Activated CD4-positive, alpha-beta T cell treated with anti-CD3 and anti-CD28 coated beads for 36 hours (primary cell): ENCODE measurements at regions of chr5 and their contacts with region 1.

Region 1: DNA sequence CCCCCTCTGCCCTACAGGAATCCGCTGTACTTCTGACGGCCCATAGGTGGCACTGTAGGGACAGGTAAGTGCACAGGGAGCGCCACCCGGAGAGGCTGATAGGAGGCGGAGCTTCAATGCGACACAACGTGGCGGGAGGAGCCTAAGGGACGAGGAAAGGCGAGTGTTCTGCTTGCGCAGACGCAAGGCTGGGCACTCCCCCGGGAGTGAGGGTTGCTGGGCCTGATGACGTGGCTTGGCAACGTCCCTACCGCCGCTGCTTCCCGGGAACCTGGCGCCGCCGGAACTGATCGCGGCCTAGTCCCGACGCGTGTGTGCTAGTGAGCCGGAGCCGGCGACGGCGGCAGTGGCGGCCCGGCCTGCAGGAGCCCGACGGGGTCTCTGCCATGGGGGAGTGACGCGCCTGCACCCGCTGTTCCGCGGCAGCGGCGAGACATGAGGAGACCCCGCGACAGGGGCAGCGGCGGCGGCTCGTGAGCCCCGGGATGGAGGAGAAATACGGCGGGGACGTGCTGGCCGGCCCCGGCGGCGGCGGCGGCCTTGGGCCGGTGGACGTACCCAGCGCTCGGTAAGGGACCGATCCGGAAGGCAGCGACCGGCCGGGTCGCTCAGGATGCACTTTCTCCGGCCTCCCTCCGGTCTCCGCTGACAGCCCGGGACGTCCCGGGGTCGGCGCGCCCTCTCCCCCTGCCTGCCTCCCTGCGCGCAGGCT is at the start of gene SLC30A5:
- DNase-seq: peak; percentile 99
- ATAC-seq: peak; percentile 100
- H3K4me3 Mint-ChIP-seq: peak within 1 kb of the TSS; percentile 90
- H3K27ac Mint-ChIP-seq: peak within 1 kb of the TSS; percentile 93
- H3K4me1 Mint-ChIP-seq: peaks cover 27% of the 10 kb centered on the region
- H3K27me3 Mint-ChIP-seq: no peaks in the 10 kb centered on the region
- total RNA-seq, gene SLC30A5: 44.1 to 45.1 TPM

Region 2: GRCh38 chr5:68505917-68506860 is 587.7 kb before region 1 on chr5:
- CTCF ChIA-PET with region 1: no interaction called
- POLR2A ChIA-PET with region 1: no interaction called
- intact Hi-C with region 1: no loop called
- DNase-seq: no peak
- ATAC-seq: no peak
- H3K4me3 Mint-ChIP-seq: no peak overlapping the region
- H3K27ac Mint-ChIP-seq: no peak overlapping the region
- H3K4me1 Mint-ChIP-seq: no peaks in the 10 kb centered on the region
- H3K27me3 Mint-ChIP-seq: no peaks in the 10 kb centered on the region

Region 3: DNA sequence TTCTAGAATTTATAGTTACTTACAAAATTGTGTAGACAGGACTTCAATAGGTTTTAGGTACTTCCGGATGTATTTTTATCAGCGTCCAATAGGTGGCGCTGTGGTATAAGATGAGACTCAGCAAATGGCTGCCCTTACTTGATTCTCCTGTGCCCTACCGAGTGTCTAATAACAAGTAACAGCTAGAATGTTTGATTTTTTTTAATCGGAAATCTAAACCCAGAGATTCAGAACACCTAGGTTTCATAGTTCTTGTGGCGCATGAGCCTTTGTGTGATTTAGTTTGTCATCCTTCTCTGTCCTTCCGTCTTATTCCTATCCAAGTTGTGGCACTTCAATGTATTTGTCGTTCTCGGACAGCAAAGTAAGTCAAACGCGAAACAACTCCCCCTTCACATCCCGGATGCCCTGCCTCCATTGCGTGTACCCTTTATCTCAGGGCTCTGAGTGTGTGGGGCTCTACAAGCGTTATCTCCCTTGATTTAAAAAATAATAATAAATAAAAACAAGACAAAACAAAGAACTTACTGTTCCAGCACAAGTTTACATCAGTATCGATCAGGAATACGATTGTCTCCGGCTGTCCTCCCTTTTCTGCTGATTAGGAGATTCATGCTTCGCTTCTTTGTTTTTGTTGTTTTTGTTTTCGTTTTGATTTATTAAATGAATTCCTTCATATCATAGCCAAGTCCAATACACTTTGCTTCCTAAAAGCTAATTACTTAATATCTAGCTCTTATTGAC is 50.8 kb before region 1 on chr5:
- CTCF ChIA-PET with region 1: interaction called, 8 read pairs
- POLR2A ChIA-PET with region 1: no interaction called
- intact Hi-C with region 1: loop called (anchors 1 to 2 kb)
- DNase-seq: peak; percentile 86
- ATAC-seq: peak; percentile 97
- H3K4me3 Mint-ChIP-seq: peak overlapping the region; percentile 70
- H3K27ac Mint-ChIP-seq: peak overlapping the region; percentile 78
- H3K4me1 Mint-ChIP-seq: peaks cover 15% of the 10 kb centered on the region
- H3K27me3 Mint-ChIP-seq: no peaks in the 10 kb centered on the region

Region 4: DNA sequence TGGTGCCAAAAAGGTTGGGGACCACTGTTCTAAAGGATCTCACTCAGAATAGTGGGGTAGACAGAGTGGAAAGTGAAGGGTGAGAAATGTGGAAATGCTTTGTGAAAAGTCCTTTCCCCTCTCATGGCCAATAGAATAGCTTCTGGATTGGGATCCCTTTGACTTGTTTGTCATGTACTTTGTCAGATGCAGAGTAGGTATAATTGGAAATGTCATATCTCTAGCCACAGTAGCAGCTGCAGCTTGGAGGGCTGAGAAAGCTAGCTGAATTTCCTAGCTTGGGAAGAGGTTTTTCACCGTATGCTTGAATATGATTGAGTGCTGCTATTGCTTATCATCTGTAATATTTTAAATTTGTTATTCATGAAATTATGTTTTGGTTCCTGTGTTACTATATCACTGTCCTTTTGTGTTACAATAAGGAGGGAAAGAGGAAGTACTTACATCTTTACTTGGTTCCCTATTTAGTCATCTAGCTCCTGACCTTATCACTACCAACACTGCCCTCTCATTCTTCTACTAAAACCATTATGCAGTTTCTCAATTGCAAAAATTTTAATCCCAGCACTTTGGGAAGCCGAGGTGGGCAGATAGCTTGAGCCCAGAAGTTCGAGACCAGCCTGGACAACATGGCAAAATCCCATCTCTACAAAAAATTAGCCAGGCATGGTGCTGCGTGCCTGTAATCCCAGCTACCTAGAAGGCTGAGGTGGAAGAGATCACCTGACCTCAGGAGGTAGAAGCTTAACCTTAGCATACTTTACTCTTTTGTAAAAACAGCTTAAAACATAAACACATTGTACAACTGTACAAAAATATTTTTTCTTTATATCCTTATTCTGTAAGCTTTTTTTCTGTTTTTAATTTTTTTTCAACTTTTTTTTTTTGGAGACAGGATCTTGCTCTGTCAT is 12.3 kb after region 1 on chr5:
- CTCF ChIA-PET with region 1: interaction called, 8 read pairs
- POLR2A ChIA-PET with region 1: no interaction called
- intact Hi-C with region 1: loop called in 1 of 2 experiments (anchors 1 kb)
- DNase-seq: no peak
- ATAC-seq: no peak
- H3K4me3 Mint-ChIP-seq: no peak overlapping the region
- H3K27ac Mint-ChIP-seq: peak overlapping the region; percentile 14
- H3K4me1 Mint-ChIP-seq: no peaks in the 10 kb centered on the region
- H3K27me3 Mint-ChIP-seq: no peaks in the 10 kb centered on the region

Region 5: DNA sequence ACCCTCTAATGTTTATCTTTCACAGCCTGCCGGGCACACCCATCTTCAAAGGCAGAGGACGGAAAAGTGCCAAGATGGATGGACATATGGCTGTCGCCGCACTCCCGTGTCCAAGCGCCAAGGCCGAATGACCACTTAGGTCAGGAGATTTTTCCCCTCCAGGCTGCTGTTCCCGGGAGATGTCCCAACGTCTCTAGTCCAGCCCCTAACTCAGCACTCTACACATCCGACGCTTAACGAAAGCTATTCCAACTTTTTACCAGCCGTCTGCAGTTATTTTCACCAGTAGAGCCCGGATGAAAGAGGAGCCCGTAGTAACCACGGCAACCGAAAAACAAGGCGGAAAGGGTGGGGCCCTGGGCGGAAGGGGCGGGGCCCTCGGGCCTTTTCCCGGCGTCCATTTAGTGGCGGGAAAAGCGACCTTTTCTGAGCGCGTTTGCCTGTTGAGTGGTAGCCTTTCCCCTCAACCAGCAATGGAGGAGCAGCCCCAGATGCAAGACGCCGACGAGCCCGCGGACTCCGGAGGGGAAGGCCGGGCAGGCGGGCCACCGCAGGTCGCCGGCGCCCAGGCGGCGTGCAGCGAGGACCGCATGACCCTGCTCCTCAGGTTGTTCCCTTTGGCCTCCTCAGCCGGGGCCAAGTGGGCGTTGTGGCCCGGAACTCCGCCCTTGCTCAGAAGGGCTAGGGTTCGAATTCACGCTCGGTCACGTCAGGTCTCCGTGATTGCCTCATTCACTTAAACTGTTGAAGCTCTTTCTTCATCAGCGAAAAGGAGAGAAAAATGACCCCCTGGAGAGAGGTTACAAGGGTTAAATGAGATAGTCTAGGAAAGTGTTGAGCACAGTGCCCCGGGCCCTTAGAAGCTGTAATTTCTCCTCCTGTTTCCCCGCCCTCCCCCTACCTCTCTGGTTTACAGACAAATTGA is 95.5 kb after region 1 on chr5 and contains the start of gene CENPH:
- CTCF ChIA-PET with region 1: interaction called, 5 read pairs
- POLR2A ChIA-PET with region 1: interaction called, 11 read pairs
- intact Hi-C with region 1: loop called (anchors 1 kb)
- DNase-seq: peak; percentile 95
- ATAC-seq: peak; percentile 90
- H3K4me3 Mint-ChIP-seq: peak within 1 kb of the TSS; percentile 96
- H3K27ac Mint-ChIP-seq: peak within 1 kb of the TSS; percentile 99
- H3K4me1 Mint-ChIP-seq: peaks cover 8% of the 10 kb centered on the region
- H3K27me3 Mint-ChIP-seq: no peaks in the 10 kb centered on the region
- total RNA-seq, gene CENPH: 96.0 to 98.3 TPM

Region 6: DNA sequence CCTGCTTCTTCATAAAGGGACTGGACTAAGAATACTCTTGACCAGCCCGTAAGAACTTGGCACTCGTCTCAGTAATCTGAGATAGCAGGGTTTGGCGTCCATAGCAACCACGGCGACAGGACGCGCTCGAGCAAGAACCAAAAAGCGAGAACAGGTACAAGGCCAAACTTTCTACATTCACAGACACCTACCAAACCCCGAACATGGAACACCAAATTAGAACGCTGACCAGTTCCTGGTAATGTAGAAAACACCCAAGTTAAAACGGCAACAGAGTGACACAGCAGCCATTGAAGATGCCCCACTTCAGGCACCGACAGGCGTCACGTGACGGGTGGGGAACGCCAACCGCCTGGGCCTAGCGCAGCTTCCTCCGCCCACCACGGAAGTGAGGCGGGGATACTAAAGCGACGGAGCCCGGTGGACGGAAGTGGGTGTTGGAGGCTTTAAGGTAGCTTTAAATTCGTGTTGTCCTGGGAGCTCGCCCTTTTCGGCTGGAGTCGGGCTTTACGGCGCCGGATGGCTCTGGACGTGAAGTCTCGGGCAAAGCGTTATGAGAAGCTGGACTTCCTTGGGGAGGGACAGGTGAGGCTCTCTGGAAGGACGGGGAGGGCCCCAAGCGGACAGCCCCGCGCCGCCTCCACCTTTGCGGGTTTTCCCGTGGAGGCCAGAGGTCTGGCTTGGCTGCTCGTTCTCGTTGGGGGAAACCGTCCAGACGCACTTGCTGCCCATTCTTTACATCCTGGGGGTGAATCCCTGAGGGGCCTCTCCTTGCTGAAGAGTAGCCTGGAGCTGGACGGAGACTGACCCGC is 140.7 kb after region 1 on chr5 and contains the start of gene CDK7:
- CTCF ChIA-PET with region 1: interaction called, 9 read pairs
- POLR2A ChIA-PET with region 1: no interaction called
- intact Hi-C with region 1: loop called (anchors 1 kb)
- DNase-seq: peak; percentile 96
- ATAC-seq: peak; percentile 100
- H3K4me3 Mint-ChIP-seq: peak within 1 kb of the TSS; percentile 80
- H3K27ac Mint-ChIP-seq: peak within 1 kb of the TSS; percentile 88
- H3K4me1 Mint-ChIP-seq: peaks cover 35% of the 10 kb centered on the region
- H3K27me3 Mint-ChIP-seq: no peaks in the 10 kb centered on the region
- total RNA-seq, gene CDK7: 47.0 to 47.8 TPM

Region 7: DNA sequence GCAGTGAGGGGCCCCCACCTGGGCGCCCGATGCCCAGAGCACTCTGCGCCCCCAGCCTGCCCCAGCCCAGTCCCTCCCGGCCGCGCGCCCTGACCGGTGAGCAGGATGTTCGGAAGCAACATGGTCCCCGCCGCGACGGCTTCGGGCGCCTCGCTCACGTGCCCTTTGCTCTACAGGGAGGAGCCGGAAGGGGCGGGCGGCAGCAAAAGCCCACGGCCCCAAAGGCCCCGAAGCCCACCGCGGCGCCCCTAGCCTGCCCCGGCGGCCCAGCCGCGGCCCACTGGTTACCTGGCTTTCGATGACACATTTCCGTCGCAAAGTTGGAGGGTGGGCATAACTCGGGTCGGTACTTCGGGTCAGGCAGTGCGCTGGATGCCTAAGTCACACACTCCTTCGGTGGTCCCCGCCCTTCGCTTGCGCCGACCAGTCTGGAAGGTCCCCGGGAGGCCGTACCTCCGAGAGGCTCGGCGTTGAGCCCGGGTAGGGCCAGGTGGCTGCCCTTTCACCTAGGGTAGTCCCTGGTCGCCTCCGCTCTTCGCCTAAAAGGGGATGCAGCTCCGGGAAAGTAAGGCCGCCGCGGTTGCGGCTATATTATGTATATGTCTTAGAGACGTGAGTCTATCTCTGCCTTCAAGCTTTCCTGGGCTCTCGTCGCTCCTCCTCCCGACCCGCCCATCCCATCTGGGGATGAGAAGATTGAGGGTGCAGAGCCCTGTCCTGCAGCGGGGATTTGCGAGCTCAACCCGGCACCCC is 275.6 kb after region 1 on chr5 and contains the starts of genes AK6, RAD17 and TAF9:
- CTCF ChIA-PET with region 1: interaction called, 10 read pairs
- POLR2A ChIA-PET with region 1: no interaction called
- intact Hi-C with region 1: loop called (anchors 1 to 2 kb)
- DNase-seq: peak; percentile 95
- ATAC-seq: peak; percentile 94
- H3K4me3 Mint-ChIP-seq: peak within 1 kb of the TSS; percentile 97
- H3K27ac Mint-ChIP-seq: peak within 1 kb of the TSS; percentile 99
- H3K4me1 Mint-ChIP-seq: peaks cover 41% of the 10 kb centered on the region
- H3K27me3 Mint-ChIP-seq: no peaks in the 10 kb centered on the region
- total RNA-seq, gene AK6: 63.2 to 93.8 TPM
- total RNA-seq, gene RAD17: 27.7 to 31.3 TPM
- total RNA-seq, gene TAF9: 67.5 to 73.8 TPM